HEK293 (cell line): ENCODE measurements at regions of chr17 and their contacts with region 1.

Region 1: GRCh38 chr17:63675607-63676413 is 24.1 kb downstream of the LIMD2 start:
- H3K4me3 ChIP-seq: no peak overlapping the region
- H3K27ac ChIP-seq: peak overlapping the region; percentile 83
- H3K4me1 ChIP-seq: peaks cover 22% of the 10 kb centered on the region
- CTCF ChIP-seq: no peak

Region 2: GRCh38 chr17:63503334-63503692 is 172.5 kb before region 1 on chr17:
- CTCF ChIA-PET with region 1: no interaction called
- POLR2A ChIA-PET with region 1: no interaction called
- H3K4me3 ChIP-seq: no peak overlapping the region
- H3K27ac ChIP-seq: no peak overlapping the region
- H3K4me1 ChIP-seq: no peaks in the 10 kb centered on the region
- CTCF ChIP-seq: no peak

Region 3: GRCh38 chr17:63697341-63698286 is 21.8 kb after region 1 on chr17:
- CTCF ChIA-PET with region 1: interaction called, 27 read pairs
- POLR2A ChIA-PET with region 1: interaction called, 10 read pairs
- H3K4me3 ChIP-seq: no peak overlapping the region
- H3K27ac ChIP-seq: peak overlapping the region; percentile 0; the same call in 1 of the 2 replicates
- H3K4me1 ChIP-seq: peaks cover 3% of the 10 kb centered on the region; the same call in 1 of the 2 replicates
- CTCF ChIP-seq: peak; percentile 95

Region 4: GRCh38 chr17:63760771-63761539 is 85.1 kb after region 1 on chr17:
- CTCF ChIA-PET with region 1: no interaction called
- POLR2A ChIA-PET with region 1: no interaction called
- H3K4me3 ChIP-seq: no peak overlapping the region
- H3K27ac ChIP-seq: no peak overlapping the region
- H3K4me1 ChIP-seq: no peaks in the 10 kb centered on the region
- CTCF ChIP-seq: no peak